ENCODE measurements at regions of chr13 and their contacts with region 1.

Region 1: GRCh38 chr13:99969919-99970621 is 1.5 kb downstream of the ZIC5 start:
- DNase-seq: peak in 6 of 14 experiments; percentile 34 to 69 (median 43)
- ATAC-seq: peak; percentile 64
- H3K4me3 ChIP-seq: peak overlapping the region; percentile 38
- H3K4me3 Mint-ChIP-seq: peak overlapping the region; percentile 88
- H3K27ac ChIP-seq: no peak overlapping the region
- H3K27ac Mint-ChIP-seq: peak overlapping the region; percentile 84
- H3K4me1 ChIP-seq: peaks cover 38% of the 10 kb centered on the region
- H3K4me1 Mint-ChIP-seq: peaks cover 26% of the 10 kb centered on the region
- H3K27me3 ChIP-seq: peaks cover 75 to 83% of the 10 kb centered on the region in 2 experiments
- H3K27me3 Mint-ChIP-seq: peaks cover 81% of the 10 kb centered on the region
- CTCF ChIP-seq: no peak

Region 2: GRCh38 chr13:99982041-99982730 is 12.1 kb after region 1 on chr13:
- CTCF ChIA-PET with region 1: no interaction called
- POLR2A ChIA-PET with region 1: interaction called, 17 read pairs
- intact Hi-C with region 1: loop called in 1 of 2 experiments (anchors 1 kb)
- DNase-seq: peak in 5 of 14 experiments; percentile 25 to 66 (median 37)
- ATAC-seq: peak; percentile 36
- H3K4me3 ChIP-seq: no peak overlapping the region
- H3K4me3 Mint-ChIP-seq: peak overlapping the region; percentile 73
- H3K27ac ChIP-seq: no peak overlapping the region
- H3K27ac Mint-ChIP-seq: peak overlapping the region; percentile 76
- H3K4me1 ChIP-seq: peaks cover 56% of the 10 kb centered on the region
- H3K4me1 Mint-ChIP-seq: peaks cover 13% of the 10 kb centered on the region
- H3K27me3 ChIP-seq: peaks cover 74 to 89% of the 10 kb centered on the region in 2 experiments
- H3K27me3 Mint-ChIP-seq: peaks cover 68% of the 10 kb centered on the region
- CTCF ChIP-seq: no peak

Region 3: DNA sequence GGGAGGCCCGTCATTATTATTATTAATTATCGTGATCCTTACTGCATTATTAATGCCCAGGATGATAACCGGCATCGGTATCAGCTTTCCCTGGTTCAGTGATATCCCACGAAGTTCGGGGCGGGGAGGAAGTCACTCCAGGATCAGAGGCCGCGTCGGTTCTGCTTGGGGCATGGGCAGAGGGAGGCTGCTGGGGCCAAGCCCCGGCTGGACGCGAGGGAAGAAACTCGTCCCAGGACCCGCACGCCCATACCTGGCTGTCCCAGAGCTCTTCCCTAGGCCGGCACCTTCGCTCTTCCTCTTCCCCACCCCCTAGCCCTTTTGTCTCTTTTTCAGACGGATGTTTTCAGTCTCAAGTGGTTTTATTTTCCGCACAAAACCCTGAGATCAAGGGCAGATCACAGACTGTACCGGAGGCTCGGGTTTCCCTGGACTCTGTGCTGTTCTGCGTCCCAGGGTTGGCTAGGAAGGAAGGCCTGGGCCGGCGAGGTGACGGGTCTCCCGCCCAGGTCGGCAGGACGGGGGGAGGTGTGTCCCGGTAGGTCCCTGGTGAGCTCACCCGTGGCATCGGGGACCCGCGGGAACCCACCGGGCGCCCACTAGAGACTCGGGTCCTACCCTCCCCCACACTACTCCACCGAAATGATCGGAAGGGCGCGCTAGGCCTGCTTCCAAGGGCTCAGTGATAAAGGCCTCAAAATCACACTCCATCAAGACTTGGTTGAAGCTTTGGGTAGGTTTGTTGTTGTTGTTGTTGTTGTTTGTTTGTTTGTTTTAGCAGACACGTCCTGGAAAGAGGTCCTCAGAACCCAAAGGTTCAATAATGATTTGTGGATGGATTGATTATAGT is 19.4 kb after region 1 on chr13:
- CTCF ChIA-PET with region 1: interaction called, 5 read pairs
- POLR2A ChIA-PET with region 1: interaction called, 17 read pairs
- intact Hi-C with region 1: loop called in 1 of 2 experiments (anchors 2 kb)
- DNase-seq: peak in 2 of 14 experiments; percentile 7 to 29
- ATAC-seq: peak; percentile 39
- H3K4me3 ChIP-seq: no peak overlapping the region
- H3K4me3 Mint-ChIP-seq: peak overlapping the region; percentile 51
- H3K27ac ChIP-seq: no peak overlapping the region
- H3K27ac Mint-ChIP-seq: no peak overlapping the region
- H3K4me1 ChIP-seq: peaks cover 45% of the 10 kb centered on the region
- H3K4me1 Mint-ChIP-seq: peaks cover 37% of the 10 kb centered on the region
- H3K27me3 ChIP-seq: peaks cover 89 to 98% of the 10 kb centered on the region in 2 experiments
- H3K27me3 Mint-ChIP-seq: peaks cover 94% of the 10 kb centered on the region
- CTCF ChIP-seq: no peak

Region 4: GRCh38 chr13:99995589-99996380 is 25.7 kb after region 1 on chr13:
- CTCF ChIA-PET with region 1: interaction called, 5 read pairs
- POLR2A ChIA-PET with region 1: interaction called, 7 read pairs
- intact Hi-C with region 1: loop called in 1 of 2 experiments (anchors 2 kb)
- DNase-seq: peak in 1 of 14 experiments; percentile 33
- ATAC-seq: no peak
- H3K4me3 ChIP-seq: no peak overlapping the region
- H3K4me3 Mint-ChIP-seq: no peak overlapping the region
- H3K27ac ChIP-seq: no peak overlapping the region
- H3K27ac Mint-ChIP-seq: no peak overlapping the region
- H3K4me1 ChIP-seq: peaks cover 27% of the 10 kb centered on the region
- H3K4me1 Mint-ChIP-seq: peaks cover 11% of the 10 kb centered on the region
- H3K27me3 ChIP-seq: peaks cover 77 to 93% of the 10 kb centered on the region in 2 experiments
- H3K27me3 Mint-ChIP-seq: peaks cover 90% of the 10 kb centered on the region
- CTCF ChIP-seq: no peak

Region 5: GRCh38 chr13:100019780-100020356 is 49.8 kb after region 1 on chr13:
- CTCF ChIA-PET with region 1: no interaction called
- POLR2A ChIA-PET with region 1: no interaction called
- intact Hi-C with region 1: no loop called
- DNase-seq: no peak
- ATAC-seq: no peak
- H3K4me3 ChIP-seq: no peak overlapping the region
- H3K4me3 Mint-ChIP-seq: no peak overlapping the region
- H3K27ac ChIP-seq: no peak overlapping the region
- H3K27ac Mint-ChIP-seq: no peak overlapping the region
- H3K4me1 ChIP-seq: no peaks in the 10 kb centered on the region
- H3K4me1 Mint-ChIP-seq: no peaks in the 10 kb centered on the region
- H3K27me3 ChIP-seq: no peaks in the 10 kb centered on the region
- H3K27me3 Mint-ChIP-seq: peaks cover under 1% of the 10 kb centered on the region
- CTCF ChIP-seq: no peak

Region 6: GRCh38 chr13:101082481-101082880 is 1112.4 kb after region 1 on chr13:
- CTCF ChIA-PET with region 1: no interaction called
- POLR2A ChIA-PET with region 1: no interaction called
- intact Hi-C with region 1: no loop called
- DNase-seq: no peak
- ATAC-seq: no peak
- H3K4me3 ChIP-seq: no peak overlapping the region
- H3K4me3 Mint-ChIP-seq: no peak overlapping the region
- H3K27ac ChIP-seq: no peak overlapping the region
- H3K27ac Mint-ChIP-seq: no peak overlapping the region
- H3K4me1 ChIP-seq: no peaks in the 10 kb centered on the region
- H3K4me1 Mint-ChIP-seq: no peaks in the 10 kb centered on the region
- H3K27me3 ChIP-seq: peaks cover 0 to 2% of the 10 kb centered on the region in 2 experiments
- H3K27me3 Mint-ChIP-seq: peaks cover 21% of the 10 kb centered on the region
- CTCF ChIP-seq: no peak